ENCODE measurements at regions of chr15 and their contacts with region 1.

Region 1: GRCh38 chr15:41774062-41774881 is at the start of gene MAPKBP1:
- DNase-seq: peak; percentile 96 to 99 (median 98)
- ATAC-seq: peak; percentile 97
- H3K4me3 ChIP-seq: peak within 1 kb of the TSS; percentile 93
- H3K4me3 Mint-ChIP-seq: peak within 1 kb of the TSS; percentile 86 to 97 (median 95)
- H3K27ac ChIP-seq: peak within 1 kb of the TSS; percentile 73
- H3K27ac Mint-ChIP-seq: peak within 1 kb of the TSS; percentile 88 to 97 (median 94)
- H3K4me1 ChIP-seq: peaks cover 36% of the 10 kb centered on the region in 2 donors
- H3K4me1 Mint-ChIP-seq: peaks cover 33 to 65% (median 59%) of the 10 kb centered on the region in 7 donors
- H3K27me3 ChIP-seq: no peaks in the 10 kb centered on the region
- H3K27me3 Mint-ChIP-seq: no peaks in the 10 kb centered on the region
- total RNA-seq, gene MAPKBP1: 36.5 to 44.7 (median 41.1) TPM

Region 2: GRCh38 chr15:40807028-40807887 is 967.0 kb before region 1 on chr15 and contains the starts of genes DNAJC17 and ZFYVE19:
- CTCF ChIA-PET with region 1: no interaction called
- POLR2A ChIA-PET with region 1: no interaction called
- intact Hi-C with region 1: loop called in 1 of 2 experiments (anchors 1 kb)
- DNase-seq: peak; percentile 86 to 96 (median 91)
- ATAC-seq: peak; percentile 99
- H3K4me3 ChIP-seq: peak within 1 kb of the TSS; percentile 99
- H3K4me3 Mint-ChIP-seq: peak within 1 kb of the TSS; percentile 92 to 98 (median 96)
- H3K27ac ChIP-seq: peak within 1 kb of the TSS; percentile 95
- H3K27ac Mint-ChIP-seq: peak within 1 kb of the TSS; percentile 84 to 98 (median 96)
- H3K4me1 ChIP-seq: peaks cover 14 to 16% of the 10 kb centered on the region in 2 donors
- H3K4me1 Mint-ChIP-seq: peaks cover 17 to 43% (median 25%) of the 10 kb centered on the region in 7 donors
- H3K27me3 ChIP-seq: no peaks in the 10 kb centered on the region
- H3K27me3 Mint-ChIP-seq: no peaks in the 10 kb centered on the region
- total RNA-seq, gene DNAJC17: 28.8 to 50.9 (median 36.7) TPM
- total RNA-seq, gene ZFYVE19: 17.9 to 31.9 (median 30.5) TPM

Region 3: GRCh38 chr15:41331833-41332787 is 442.2 kb before region 1 on chr15 and contains the start of gene OIP5:
- CTCF ChIA-PET with region 1: no interaction called
- POLR2A ChIA-PET with region 1: no interaction called
- intact Hi-C with region 1: loop called in 1 of 2 experiments (anchors 1 kb)
- DNase-seq: peak; percentile 83 to 99 (median 97)
- ATAC-seq: peak; percentile 98
- H3K4me3 ChIP-seq: peak within 1 kb of the TSS; percentile 95
- H3K4me3 Mint-ChIP-seq: peak within 1 kb of the TSS; percentile 87 to 100 (median 97)
- H3K27ac ChIP-seq: peak within 1 kb of the TSS; percentile 52
- H3K27ac Mint-ChIP-seq: peak within 1 kb of the TSS; percentile 77 to 97 (median 91)
- H3K4me1 ChIP-seq: peaks cover 9 to 13% of the 10 kb centered on the region in 2 donors
- H3K4me1 Mint-ChIP-seq: peaks cover 12 to 32% (median 29%) of the 10 kb centered on the region in 7 donors
- H3K27me3 ChIP-seq: no peaks in the 10 kb centered on the region
- H3K27me3 Mint-ChIP-seq: no peaks in the 10 kb centered on the region
- total RNA-seq, gene OIP5: 0.32 to 15.2 (median 0.54) TPM in 4 of 5 experiments, not detected in the other

Region 4: DNA sequence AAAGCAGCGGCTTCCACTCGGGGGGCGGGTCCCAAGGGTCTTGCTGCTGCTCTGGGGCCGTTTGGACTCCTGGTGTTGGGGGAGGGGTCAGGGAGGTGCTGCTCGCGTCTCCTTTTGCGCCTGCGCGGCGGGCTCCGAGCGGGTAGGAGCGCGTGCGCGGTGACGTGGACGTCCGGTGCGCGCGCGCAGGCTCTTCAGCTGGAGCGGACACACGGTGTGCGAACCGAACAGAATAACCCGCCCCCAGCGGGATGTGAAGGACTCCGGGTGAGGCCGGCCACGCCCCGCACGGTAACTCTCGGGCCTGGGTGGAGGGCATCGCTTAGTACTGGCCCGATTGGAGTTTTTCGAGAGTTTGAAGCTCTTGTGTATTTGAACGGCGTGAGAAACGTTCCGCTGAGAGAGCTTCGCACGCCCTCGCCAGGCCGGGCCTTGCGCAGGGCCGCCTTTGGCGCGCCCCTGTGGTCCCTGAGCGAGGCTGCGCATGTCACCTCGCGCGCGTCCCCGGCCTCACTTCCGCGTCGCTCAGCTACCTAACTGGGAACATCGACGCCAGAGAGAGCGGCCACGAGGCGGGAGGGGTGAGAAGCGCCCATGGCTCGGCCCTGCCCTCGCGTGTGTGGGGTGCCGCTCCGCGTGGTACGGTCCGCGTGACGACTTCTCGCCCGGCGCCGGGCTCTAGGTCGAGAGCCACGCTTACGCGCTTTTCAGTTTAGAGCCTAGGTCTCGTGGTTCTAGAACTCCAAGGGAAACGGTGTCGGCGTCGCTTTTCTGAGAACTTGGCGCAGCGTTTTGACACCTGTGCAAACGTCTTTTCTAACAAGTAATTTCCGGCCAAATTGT is 113.8 kb before region 1 on chr15 and contains the start of gene MGA:
- CTCF ChIA-PET with region 1: no interaction called
- POLR2A ChIA-PET with region 1: interaction called, 8 read pairs
- intact Hi-C with region 1: loop called (anchors 1 kb)
- DNase-seq: peak; percentile 86 to 93 (median 91)
- ATAC-seq: peak; percentile 87
- H3K4me3 ChIP-seq: peak within 1 kb of the TSS; percentile 64
- H3K4me3 Mint-ChIP-seq: peak within 1 kb of the TSS; percentile 90 to 100 (median 92)
- H3K27ac ChIP-seq: peak within 1 kb of the TSS; percentile 76
- H3K27ac Mint-ChIP-seq: peak within 1 kb of the TSS; percentile 92 to 98 (median 96)
- H3K4me1 ChIP-seq: peaks cover 20 to 28% of the 10 kb centered on the region in 2 donors
- H3K4me1 Mint-ChIP-seq: peaks cover 16 to 64% (median 47%) of the 10 kb centered on the region in 7 donors
- H3K27me3 ChIP-seq: no peaks in the 10 kb centered on the region
- H3K27me3 Mint-ChIP-seq: peaks cover 0 to 45% (median 0%) of the 10 kb centered on the region in 5 donors
- total RNA-seq, gene MGA: 35.8 to 73.8 (median 47.3) TPM

Region 5: DNA sequence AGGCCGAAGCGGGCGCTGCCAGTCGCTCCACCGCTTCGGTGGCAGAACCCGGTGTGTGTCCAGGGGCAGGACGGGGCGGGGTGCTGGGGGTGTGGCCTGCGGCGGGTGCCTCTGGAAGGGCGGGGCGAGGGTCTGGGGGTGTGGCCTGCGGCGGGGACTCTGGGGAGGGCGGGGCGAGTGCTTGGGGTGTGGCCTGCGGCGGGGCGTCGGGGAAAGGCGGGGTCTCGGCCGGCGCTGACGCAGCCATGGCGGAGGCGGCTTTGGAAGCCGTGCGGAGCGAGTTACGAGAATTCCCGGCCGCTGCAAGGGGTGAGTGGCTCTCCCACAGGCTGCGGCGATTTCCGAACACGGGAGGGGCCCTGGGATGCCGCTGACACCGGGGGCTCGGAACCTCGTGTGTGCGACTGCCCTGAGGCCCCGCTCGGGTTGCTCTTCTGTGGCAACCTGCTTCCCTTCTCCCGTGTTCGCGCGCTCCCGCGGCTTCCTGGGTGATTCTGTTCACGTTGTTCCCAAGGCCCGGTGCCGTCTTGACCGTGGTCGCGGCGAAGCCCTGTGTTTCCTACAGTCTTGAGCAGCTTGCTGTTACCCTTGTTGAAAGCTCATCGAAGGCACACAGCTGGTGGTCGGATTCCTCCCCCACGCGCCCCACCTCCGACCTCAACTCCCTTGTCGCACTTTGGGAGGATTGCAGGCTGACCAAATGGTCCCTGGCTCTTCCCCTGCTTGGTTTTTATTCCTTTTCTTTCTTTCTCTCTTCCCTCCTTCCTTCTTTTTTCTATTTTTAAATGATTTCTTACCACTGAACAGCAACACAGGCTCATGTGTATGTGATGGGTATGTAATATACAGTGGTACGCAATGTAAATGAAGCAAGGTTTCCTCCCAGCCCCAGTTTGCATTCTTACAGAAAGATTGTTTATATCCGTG is 53.9 kb after region 1 on chr15 and contains the start of gene JMJD7:
- CTCF ChIA-PET with region 1: interaction called, 6 read pairs
- POLR2A ChIA-PET with region 1: interaction called, 16 read pairs
- intact Hi-C with region 1: loop called (anchors 1 kb)
- DNase-seq: peak; percentile 81 to 98 (median 91)
- ATAC-seq: peak; percentile 99
- H3K4me3 ChIP-seq: peak within 1 kb of the TSS; percentile 99
- H3K4me3 Mint-ChIP-seq: peak within 1 kb of the TSS; percentile 86 to 99 (median 96)
- H3K27ac ChIP-seq: peak within 1 kb of the TSS; percentile 94
- H3K27ac Mint-ChIP-seq: peak within 1 kb of the TSS; percentile 78 to 96 (median 92)
- H3K4me1 ChIP-seq: peaks cover 26 to 38% of the 10 kb centered on the region in 2 donors
- H3K4me1 Mint-ChIP-seq: peaks cover 34 to 53% (median 50%) of the 10 kb centered on the region in 7 donors
- H3K27me3 ChIP-seq: no peaks in the 10 kb centered on the region
- H3K27me3 Mint-ChIP-seq: peaks cover 0 to 3% (median 0%) of the 10 kb centered on the region in 5 donors
- total RNA-seq, gene JMJD7: 25.3 to 83.7 (median 52.1) TPM

Region 6: DNA sequence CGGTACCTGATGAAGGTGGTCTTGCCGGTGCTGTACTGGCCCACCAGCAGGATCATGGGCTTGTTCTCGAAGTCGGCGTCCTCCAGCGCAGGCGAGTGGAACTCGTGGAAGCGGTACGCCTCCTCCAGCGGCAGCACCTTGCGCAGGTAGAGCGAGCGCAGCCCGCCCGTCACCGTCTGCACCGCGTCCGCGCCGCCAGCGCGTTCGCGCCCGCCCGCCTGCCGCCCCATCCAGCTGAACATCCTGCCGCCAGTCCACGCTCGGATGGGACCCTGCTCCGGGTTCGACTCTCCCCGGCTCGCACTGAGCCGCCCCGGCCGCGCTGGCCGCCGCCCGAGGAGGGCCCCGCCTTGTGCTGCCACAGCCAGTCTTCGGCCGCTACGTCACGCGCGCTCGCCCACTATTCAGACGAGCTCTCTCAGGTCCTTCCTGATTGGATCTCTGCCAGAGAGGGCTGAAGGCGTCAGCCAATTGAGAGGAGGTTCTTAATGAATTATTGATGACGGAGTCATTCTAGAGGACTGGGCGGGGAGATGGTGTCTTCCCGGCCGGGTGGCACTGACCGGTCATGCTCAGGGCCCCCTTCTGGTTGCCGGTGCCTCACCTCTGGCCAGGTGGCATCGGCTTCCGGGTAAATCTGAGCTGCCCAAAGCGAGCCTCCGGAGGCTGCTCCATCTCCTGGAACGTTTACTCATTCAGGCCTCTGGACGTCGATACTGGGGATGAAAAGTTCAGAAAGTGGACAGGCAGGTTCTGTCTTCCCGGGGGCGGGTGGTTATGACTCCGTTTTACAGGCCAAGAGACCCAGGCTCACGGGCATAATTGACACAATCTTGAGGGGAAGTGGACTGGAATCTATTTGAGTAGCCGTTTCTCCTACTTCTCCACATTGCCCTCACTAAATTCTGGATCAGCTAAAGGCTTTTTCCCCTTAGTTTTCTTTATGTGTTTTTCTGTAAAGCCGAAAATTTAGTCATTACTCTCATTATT is 198.3 kb after region 1 on chr15 and contains the start of gene EHD4:
- CTCF ChIA-PET with region 1: interaction called, 4 read pairs
- POLR2A ChIA-PET with region 1: interaction called, 3 read pairs
- intact Hi-C with region 1: loop called (anchors 1 kb)
- DNase-seq: peak; percentile 85 to 96 (median 94)
- ATAC-seq: peak; percentile 91
- H3K4me3 ChIP-seq: peak within 1 kb of the TSS; percentile 87
- H3K4me3 Mint-ChIP-seq: peak within 1 kb of the TSS; percentile 85 to 97 (median 94)
- H3K27ac ChIP-seq: peak within 1 kb of the TSS; percentile 83
- H3K27ac Mint-ChIP-seq: peak within 1 kb of the TSS; percentile 90 to 97 (median 95)
- H3K4me1 ChIP-seq: peaks cover 19 to 23% of the 10 kb centered on the region in 2 donors
- H3K4me1 Mint-ChIP-seq: peaks cover 31 to 55% (median 45%) of the 10 kb centered on the region in 7 donors
- H3K27me3 ChIP-seq: no peaks in the 10 kb centered on the region
- H3K27me3 Mint-ChIP-seq: peaks cover 0 to 17% (median 7%) of the 10 kb centered on the region in 5 donors
- total RNA-seq, gene EHD4: 10.4 to 48.3 (median 23.7) TPM

Measured in naive thymus-derived CD4-positive, alpha-beta T cell (primary cell).